ENCODE measurements at regions of chr5 and their contacts with region 1.

Region 1: DNA sequence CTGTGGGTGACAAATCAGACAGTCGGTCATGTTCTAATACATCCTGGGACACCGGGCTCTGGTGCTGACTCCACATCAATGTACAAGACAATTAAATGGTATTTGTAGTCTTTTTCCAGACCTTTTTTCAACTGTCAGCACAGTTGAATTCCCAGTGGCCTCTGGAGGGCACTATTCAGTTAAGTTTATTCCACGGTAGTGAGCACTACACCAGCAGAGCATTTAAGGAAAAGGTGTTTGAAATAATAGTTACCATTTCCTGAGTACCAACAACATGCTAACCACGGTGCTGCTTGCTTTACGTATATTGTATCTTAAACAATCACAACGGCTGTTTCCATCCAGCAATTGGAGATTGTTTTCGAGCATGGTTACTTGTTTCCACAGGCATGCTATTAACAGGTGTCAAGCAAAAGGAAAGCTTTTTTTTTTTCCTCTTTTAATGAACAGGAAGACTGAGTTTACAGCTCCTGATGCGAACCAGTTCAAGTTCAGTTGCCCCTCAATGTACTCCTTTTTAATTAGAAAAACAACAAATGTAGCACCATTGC is 186.7 kb downstream of the PDZD2 start:
- DNase-seq: peak in 1 of 2 experiments; percentile 63
- H3K4me3 ChIP-seq: no peak overlapping the region
- H3K27ac ChIP-seq: no peak overlapping the region
- H3K4me1 ChIP-seq: no peaks in the 10 kb centered on the region
- H3K27me3 ChIP-seq: no peaks in the 10 kb centered on the region
- CTCF ChIP-seq: peak in 2 of 3 experiments; percentile 68 to 75; a peak in 3 of 4 replicates
- EP300 ChIP-seq: no peak
- POLR2A ChIP-seq: no peak
- RAD21 ChIP-seq: peak; percentile 82 to 90

Region 2: DNA sequence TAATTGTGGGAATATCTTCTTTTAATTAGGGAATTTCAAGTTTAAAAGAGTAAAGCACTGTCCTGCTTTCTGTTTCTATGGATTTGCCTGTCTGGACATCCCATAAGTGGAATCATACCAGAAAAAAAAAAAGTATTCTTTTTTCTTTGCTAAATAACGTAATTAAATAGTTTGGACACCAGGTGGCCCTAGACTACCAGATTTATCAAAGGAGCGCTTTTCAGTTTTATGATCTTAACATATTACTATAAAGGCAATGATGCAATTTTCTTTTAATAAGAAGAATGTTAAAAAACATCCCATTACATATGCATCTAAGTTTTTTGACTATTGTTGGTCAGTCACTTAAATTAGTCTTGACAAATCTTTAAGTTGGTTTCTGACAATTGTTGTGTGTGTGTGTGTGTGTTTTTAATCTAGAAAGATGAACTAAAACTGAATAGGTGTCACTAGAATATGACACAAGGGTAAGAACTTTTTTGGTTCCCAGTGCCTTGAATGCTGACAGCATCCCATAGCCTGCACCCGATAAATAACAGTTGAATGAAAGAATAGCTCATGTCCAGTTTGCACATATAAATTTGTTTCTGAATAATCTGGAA is 244.0 kb before region 1 on chr5:
- CTCF ChIA-PET with region 1: interaction called, 10 read pairs
- POLR2A ChIA-PET with region 1: no interaction called
- DNase-seq: no peak
- H3K4me3 ChIP-seq: no peak overlapping the region
- H3K27ac ChIP-seq: no peak overlapping the region
- H3K4me1 ChIP-seq: no peaks in the 10 kb centered on the region; a peak in 1 of 7 replicates
- H3K27me3 ChIP-seq: no peaks in the 10 kb centered on the region
- CTCF ChIP-seq: peak in 1 of 3 experiments; percentile 44; a peak in 1 of 4 replicates
- EP300 ChIP-seq: no peak
- POLR2A ChIP-seq: no peak
- RAD21 ChIP-seq: peak; percentile 64 to 74

Region 3: DNA sequence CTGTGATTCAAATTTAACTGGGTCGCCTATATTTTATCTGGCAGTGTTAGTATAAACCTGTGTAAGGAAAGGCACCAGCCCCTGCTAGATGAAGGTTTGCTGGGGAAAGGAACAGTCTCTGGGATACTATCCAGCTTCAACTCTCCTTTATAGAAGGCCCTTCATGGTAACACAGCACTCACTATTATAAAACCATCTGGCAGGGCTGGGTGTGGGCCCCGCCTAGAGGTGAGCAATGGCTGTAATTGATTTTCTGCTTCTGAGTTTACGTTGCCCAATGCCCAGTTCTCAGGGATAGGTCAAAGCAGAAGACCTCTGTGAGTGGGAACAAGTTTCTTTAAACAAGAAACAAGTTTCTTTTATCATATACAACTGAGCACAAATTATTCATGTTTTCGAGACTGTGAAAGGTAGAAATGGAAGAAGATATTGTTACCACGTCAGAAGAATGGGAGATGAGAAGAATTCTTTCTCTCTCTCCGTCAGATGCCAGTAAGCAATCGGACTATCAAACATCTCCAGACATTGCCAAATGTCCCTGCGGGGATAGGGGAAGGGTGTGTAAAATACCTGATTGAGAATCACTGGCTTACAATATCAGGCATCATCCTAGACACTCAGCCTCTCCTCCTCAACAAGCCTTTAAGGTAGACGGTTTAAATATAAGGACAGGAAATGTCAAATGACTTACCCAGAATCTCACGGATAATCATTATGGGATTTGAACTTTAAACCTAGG is 19.2 kb after region 1 on chr5:
- CTCF ChIA-PET with region 1: interaction called, 10 read pairs
- POLR2A ChIA-PET with region 1: no interaction called
- DNase-seq: no peak
- H3K4me3 ChIP-seq: no peak overlapping the region
- H3K27ac ChIP-seq: no peak overlapping the region
- H3K4me1 ChIP-seq: no peaks in the 10 kb centered on the region
- H3K27me3 ChIP-seq: no peaks in the 10 kb centered on the region
- CTCF ChIP-seq: no peak
- EP300 ChIP-seq: no peak
- POLR2A ChIP-seq: no peak
- RAD21 ChIP-seq: peak; percentile 15 to 30; a peak in 3 of 4 replicates

Region 4: GRCh38 chr5:31863991-31864411 is 38.4 kb after region 1 on chr5:
- CTCF ChIA-PET with region 1: interaction called, 11 read pairs
- POLR2A ChIA-PET with region 1: no interaction called
- DNase-seq: no peak
- H3K4me3 ChIP-seq: no peak overlapping the region
- H3K27ac ChIP-seq: no peak overlapping the region
- H3K4me1 ChIP-seq: peaks cover 0 to 4% (median 3%) of the 10 kb centered on the region in 4 experiments; a peak in 3 of 7 replicates
- H3K27me3 ChIP-seq: no peaks in the 10 kb centered on the region
- CTCF ChIP-seq: no peak
- EP300 ChIP-seq: no peak
- POLR2A ChIP-seq: no peak
- RAD21 ChIP-seq: no peak

Region 5: DNA sequence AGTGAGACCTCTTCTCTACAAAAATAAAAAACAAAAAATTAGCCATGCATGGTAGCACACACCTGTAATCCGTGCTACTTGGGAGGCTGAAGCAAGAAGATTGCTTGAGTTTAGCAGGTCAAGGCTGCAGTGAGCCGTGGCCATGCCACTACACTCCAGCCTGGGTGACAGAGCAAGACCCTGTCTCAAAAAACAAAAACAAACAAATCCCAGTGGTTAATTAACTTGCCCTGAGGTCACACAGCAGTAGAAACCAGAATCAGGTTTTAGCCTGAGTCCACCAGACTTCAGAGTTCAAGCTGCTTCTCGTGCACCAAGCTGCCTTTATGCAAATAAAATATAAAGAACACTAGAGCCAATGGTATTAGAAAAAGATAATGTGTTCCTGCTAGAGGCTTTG is 178.8 kb after region 1 on chr5:
- CTCF ChIA-PET with region 1: no interaction called
- POLR2A ChIA-PET with region 1: no interaction called
- DNase-seq: no peak
- H3K4me3 ChIP-seq: no peak overlapping the region
- H3K27ac ChIP-seq: no peak overlapping the region
- H3K4me1 ChIP-seq: peaks cover 0 to 4% (median 0%) of the 10 kb centered on the region in 4 experiments; a peak in 3 of 7 replicates
- H3K27me3 ChIP-seq: no peaks in the 10 kb centered on the region
- CTCF ChIP-seq: no peak
- EP300 ChIP-seq: no peak
- POLR2A ChIP-seq: no peak
- RAD21 ChIP-seq: no peak

Region 6: DNA sequence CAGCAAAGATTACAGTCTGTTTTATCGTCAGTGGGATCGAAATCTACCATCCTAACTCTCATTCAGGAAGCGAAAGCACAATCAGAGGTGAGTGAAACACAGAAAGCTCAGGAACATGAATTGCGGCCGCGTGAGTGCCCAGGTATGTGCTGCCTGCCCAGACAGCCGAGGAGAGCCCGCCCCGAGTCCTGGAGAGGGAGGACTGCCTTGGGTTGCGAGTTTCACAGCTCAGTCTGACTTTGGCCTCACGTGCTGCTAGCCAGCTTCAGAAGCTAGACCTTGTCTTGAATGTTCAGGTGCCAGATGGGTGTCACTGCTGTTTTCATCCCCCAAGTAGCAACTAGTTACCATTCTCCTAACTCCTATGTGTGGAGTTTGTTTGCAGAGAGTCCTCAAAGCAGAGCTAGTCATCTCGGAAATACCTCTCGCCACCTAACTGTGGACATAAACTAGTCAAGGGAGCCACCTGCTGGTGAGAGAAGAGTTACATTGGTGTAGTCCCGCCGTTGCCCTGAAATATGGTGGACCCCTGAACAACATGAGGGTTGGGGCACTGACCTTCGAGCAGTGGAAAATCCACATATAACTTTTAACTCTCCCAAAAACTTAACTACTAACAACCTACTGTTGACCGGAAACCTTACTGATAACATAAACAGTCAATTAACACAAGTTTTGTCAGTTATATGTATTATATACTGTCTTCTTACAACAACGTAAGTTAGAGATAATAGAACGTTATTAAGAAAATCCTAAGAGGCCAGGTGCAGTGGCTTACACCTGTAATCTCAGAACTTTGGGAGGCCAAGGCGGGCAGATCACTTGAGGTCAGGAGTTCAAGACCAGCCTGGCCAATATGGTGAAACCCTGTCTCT is 267.6 kb after region 1 on chr5:
- CTCF ChIA-PET with region 1: interaction called, 68 read pairs
- POLR2A ChIA-PET with region 1: no interaction called
- DNase-seq: peak; percentile 39 to 84
- H3K4me3 ChIP-seq: no peak overlapping the region
- H3K27ac ChIP-seq: no peak overlapping the region
- H3K4me1 ChIP-seq: peaks cover 0 to 2% (median 0%) of the 10 kb centered on the region in 4 experiments; a peak in 1 of 7 replicates
- H3K27me3 ChIP-seq: no peaks in the 10 kb centered on the region
- CTCF ChIP-seq: peak; percentile 73 to 90 (median 87)
- EP300 ChIP-seq: no peak
- POLR2A ChIP-seq: no peak
- RAD21 ChIP-seq: peak; percentile 94 to 95

Measured in H1 (cell line).